Caco-2 (cell line): ENCODE measurements at regions of chr11 and their contacts with region 1.

Region 1: DNA sequence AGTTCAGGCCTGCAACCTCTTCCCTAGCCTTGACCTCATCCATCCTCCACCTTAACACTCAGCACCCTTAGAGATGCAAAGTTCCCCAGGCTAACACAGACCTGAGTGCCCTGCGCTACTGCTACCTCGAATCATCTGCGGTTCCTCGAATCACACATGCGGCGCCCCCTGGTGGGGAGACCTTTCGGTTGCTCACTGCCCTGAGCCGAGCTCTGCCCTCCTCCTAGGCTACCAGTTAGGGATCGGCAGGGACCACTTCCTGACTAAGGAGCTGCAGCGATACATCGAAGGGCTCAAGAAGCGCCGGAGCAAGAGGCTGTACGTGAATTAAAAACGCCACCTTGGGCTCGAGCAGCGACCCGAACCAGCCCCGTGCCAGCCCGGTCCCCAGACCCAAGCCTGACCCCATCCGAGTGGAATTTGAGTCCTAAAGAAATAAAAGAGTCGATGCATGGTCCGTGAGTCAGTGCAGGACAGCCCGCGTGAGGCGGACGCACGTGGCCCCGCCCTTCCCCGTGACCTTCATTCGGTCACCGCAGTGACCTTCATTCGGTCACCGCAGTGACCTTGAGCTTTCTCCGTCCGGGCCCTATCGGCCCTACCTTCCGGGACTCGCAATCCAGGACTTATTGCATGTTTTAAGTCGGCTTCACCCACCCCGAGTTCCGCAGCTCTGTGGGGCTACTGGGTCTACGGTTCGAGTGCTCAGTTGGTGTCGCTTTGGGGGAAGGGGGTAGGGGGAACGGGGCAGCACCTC is 830 bp upstream of the ESRRA start:
- DNase-seq: peak; percentile 93 to 95
- H3K4me3 ChIP-seq: peak overlapping the region; percentile 65
- H3K4me3 Mint-ChIP-seq: peak overlapping the region; percentile 97
- H3K27ac Mint-ChIP-seq: peak overlapping the region; percentile 99
- H3K4me1 ChIP-seq: peaks cover 28% of the 10 kb centered on the region
- H3K4me1 Mint-ChIP-seq: peaks cover 9% of the 10 kb centered on the region
- H3K27me3 ChIP-seq: no peaks in the 10 kb centered on the region
- H3K27me3 Mint-ChIP-seq: no peaks in the 10 kb centered on the region
- CTCF ChIP-seq: peak; percentile 87 to 97

Region 2: GRCh38 chr11:64196626-64197025 is 107.9 kb before region 1 on chr11:
- CTCF ChIA-PET with region 1: no interaction called
- POLR2A ChIA-PET with region 1: no interaction called
- intact Hi-C with region 1: no loop called
- DNase-seq: no peak
- H3K4me3 ChIP-seq: no peak overlapping the region
- H3K4me3 Mint-ChIP-seq: no peak overlapping the region
- H3K27ac Mint-ChIP-seq: no peak overlapping the region
- H3K4me1 ChIP-seq: no peaks in the 10 kb centered on the region
- H3K4me1 Mint-ChIP-seq: no peaks in the 10 kb centered on the region
- H3K27me3 ChIP-seq: no peaks in the 10 kb centered on the region
- H3K27me3 Mint-ChIP-seq: no peaks in the 10 kb centered on the region
- CTCF ChIP-seq: no peak

Region 3: GRCh38 chr11:64240394-64241174 is 63.9 kb before region 1 on chr11 and contains the start of gene FKBP2:
- CTCF ChIA-PET with region 1: interaction called, 13 read pairs
- POLR2A ChIA-PET with region 1: interaction called, 12 read pairs
- intact Hi-C with region 1: loop called (anchors 2 kb)
- DNase-seq: peak; percentile 97 to 99
- H3K4me3 ChIP-seq: peak within 1 kb of the TSS; percentile 95
- H3K4me3 Mint-ChIP-seq: peak within 1 kb of the TSS; percentile 88
- H3K27ac Mint-ChIP-seq: peak within 1 kb of the TSS; percentile 90
- H3K4me1 ChIP-seq: peaks cover 20% of the 10 kb centered on the region
- H3K4me1 Mint-ChIP-seq: peaks cover 15% of the 10 kb centered on the region
- H3K27me3 ChIP-seq: no peaks in the 10 kb centered on the region
- H3K27me3 Mint-ChIP-seq: no peaks in the 10 kb centered on the region
- CTCF ChIP-seq: no peak
- total RNA-seq, gene FKBP2: 70.2 and 76.8 TPM in 2 replicates

Region 4: GRCh38 chr11:64246871-64247728 is 57.4 kb before region 1 on chr11 and contains the start of gene PPP1R14B:
- CTCF ChIA-PET with region 1: interaction called, 8 read pairs
- POLR2A ChIA-PET with region 1: interaction called, 5 read pairs
- intact Hi-C with region 1: loop called (anchors 1 kb)
- DNase-seq: peak; percentile 92 to 95
- H3K4me3 ChIP-seq: peak within 1 kb of the TSS; percentile 91
- H3K4me3 Mint-ChIP-seq: peak within 1 kb of the TSS; percentile 97
- H3K27ac Mint-ChIP-seq: peak within 1 kb of the TSS; percentile 90
- H3K4me1 ChIP-seq: peaks cover 32% of the 10 kb centered on the region
- H3K4me1 Mint-ChIP-seq: peaks cover 20% of the 10 kb centered on the region
- H3K27me3 ChIP-seq: no peaks in the 10 kb centered on the region
- H3K27me3 Mint-ChIP-seq: no peaks in the 10 kb centered on the region
- CTCF ChIP-seq: no peak
- total RNA-seq, gene PPP1R14B: 162 and 185 TPM in 2 replicates

Region 5: DNA sequence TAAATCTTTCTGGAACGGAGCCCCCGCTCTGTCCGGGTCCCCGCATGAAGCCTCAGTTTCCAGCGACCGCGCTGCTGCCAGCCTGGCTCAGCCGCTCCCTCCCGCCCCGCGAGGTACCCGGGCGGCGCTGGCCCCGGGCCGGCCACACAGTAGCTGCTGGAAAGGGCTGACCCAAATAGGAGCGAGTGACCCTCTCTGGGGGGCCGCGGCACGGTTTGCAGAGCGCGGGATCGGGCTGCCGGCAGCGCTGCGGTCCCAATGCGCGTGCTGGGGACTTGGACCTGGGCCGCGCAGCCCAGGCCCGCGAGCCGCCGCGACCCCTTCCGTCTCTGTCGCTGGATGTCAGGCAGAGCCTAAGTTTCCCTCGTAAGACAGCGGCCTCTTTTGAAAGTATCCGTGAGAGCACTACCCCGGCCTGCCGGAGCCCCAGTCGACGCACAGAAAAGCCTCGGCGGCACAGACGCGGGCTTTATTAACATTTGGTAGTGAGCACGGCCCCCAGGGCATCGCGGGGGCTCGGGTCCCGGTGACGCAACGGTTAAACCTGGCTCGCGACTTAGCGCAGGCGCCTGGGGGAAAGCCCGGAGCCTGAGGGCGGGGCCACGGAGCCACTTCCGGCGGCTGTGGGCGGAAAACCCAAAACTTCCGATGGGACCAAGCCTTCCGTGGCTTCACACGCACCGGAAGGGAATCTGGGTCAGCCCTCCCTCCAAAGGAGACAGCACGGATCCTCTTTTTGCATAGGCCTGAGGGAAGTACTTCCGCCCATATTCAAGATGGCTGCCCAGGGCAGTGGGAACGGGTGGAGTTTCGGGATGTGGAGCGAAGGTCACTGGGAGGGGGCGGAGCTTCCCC is 34.9 kb before region 1 on chr11:
- CTCF ChIA-PET with region 1: interaction called, 36 read pairs
- POLR2A ChIA-PET with region 1: interaction called, 10 read pairs
- intact Hi-C with region 1: loop called (anchors 1 kb)
- DNase-seq: peak; percentile 99
- H3K4me3 ChIP-seq: peak overlapping the region; percentile 85
- H3K4me3 Mint-ChIP-seq: peak overlapping the region; percentile 89
- H3K27ac Mint-ChIP-seq: peak overlapping the region; percentile 95
- H3K4me1 ChIP-seq: peaks cover 21% of the 10 kb centered on the region
- H3K4me1 Mint-ChIP-seq: peaks cover 17% of the 10 kb centered on the region
- H3K27me3 ChIP-seq: no peaks in the 10 kb centered on the region
- H3K27me3 Mint-ChIP-seq: no peaks in the 10 kb centered on the region
- CTCF ChIP-seq: no peak

Region 6: GRCh38 chr11:64284048-64284961 is 20.2 kb before region 1 on chr11 and contains the start of gene BAD:
- CTCF ChIA-PET with region 1: interaction called, 10 read pairs
- POLR2A ChIA-PET with region 1: interaction called, 4 read pairs
- intact Hi-C with region 1: loop called (anchors 2 kb)
- DNase-seq: peak; percentile 95 to 97
- H3K4me3 ChIP-seq: peak within 1 kb of the TSS; percentile 74
- H3K4me3 Mint-ChIP-seq: peak within 1 kb of the TSS; percentile 82
- H3K27ac Mint-ChIP-seq: peak within 1 kb of the TSS; percentile 91
- H3K4me1 ChIP-seq: peaks cover 5% of the 10 kb centered on the region
- H3K4me1 Mint-ChIP-seq: peaks cover 14% of the 10 kb centered on the region
- H3K27me3 ChIP-seq: no peaks in the 10 kb centered on the region
- H3K27me3 Mint-ChIP-seq: no peaks in the 10 kb centered on the region
- CTCF ChIP-seq: no peak
- total RNA-seq, gene BAD: 50.5 and 51.6 TPM in 2 replicates